ENCODE measurements at regions of chr11 and their contacts with region 1.

Region 1: GRCh38 chr11:62591448-62592145 is at the start of gene TUT1:
- DNase-seq: peak; percentile 97
- H3K4me3 ChIP-seq: peak within 1 kb of the TSS; percentile 44 to 76 (median 66)
- H3K27ac ChIP-seq: peak within 1 kb of the TSS; percentile 93 to 98 (median 96)
- H3K4me1 ChIP-seq: peaks cover 16 to 37% (median 25%) of the 10 kb centered on the region in 4 donors
- H3K27me3 ChIP-seq: no peaks in the 10 kb centered on the region
- CTCF ChIP-seq: no peak
- EP300 ChIP-seq: no peak
- POLR2A ChIP-seq: peak; percentile 92
- total RNA-seq, gene TUT1: 6.0 to 12.4 (median 9.8) TPM

Region 2: GRCh38 chr11:62645956-62646824 is 54.6 kb after region 1 on chr11 and contains the start of gene GANAB:
- in situ Hi-C with region 1: no loop called
- intact Hi-C with region 1: no loop called
- DNase-seq: peak; percentile 100
- H3K4me3 ChIP-seq: peak within 1 kb of the TSS; percentile 81 to 99 (median 85)
- H3K27ac ChIP-seq: peak within 1 kb of the TSS; percentile 91 to 99 (median 94)
- H3K4me1 ChIP-seq: peaks cover 12 to 25% (median 21%) of the 10 kb centered on the region in 4 donors
- H3K27me3 ChIP-seq: no peaks in the 10 kb centered on the region
- CTCF ChIP-seq: peak in 2 of 5 experiments; percentile 14 to 21
- EP300 ChIP-seq: no peak
- POLR2A ChIP-seq: peak; percentile 92
- total RNA-seq, gene GANAB: 60.2 to 129 (median 120) TPM

Region 3: GRCh38 chr11:62694455-62695167 is 103.0 kb after region 1 on chr11:
- in situ Hi-C with region 1: loop called in 1 of 4 experiments (anchors 10 kb)
- intact Hi-C with region 1: no loop called
- DNase-seq: peak; percentile 85
- H3K4me3 ChIP-seq: no peak overlapping the region
- H3K27ac ChIP-seq: no peak overlapping the region
- H3K4me1 ChIP-seq: peaks cover 0 to 7% (median 0%) of the 10 kb centered on the region in 4 donors
- H3K27me3 ChIP-seq: no peaks in the 10 kb centered on the region
- CTCF ChIP-seq: peak; percentile 64 to 85 (median 83)
- EP300 ChIP-seq: no peak
- POLR2A ChIP-seq: no peak